Colonic mucosa (tissue), 4 donors: ENCODE measurements at regions of chr5 and their contacts with region 1.

Region 1: GRCh38 chr5:57082441-57083067 is 91.3 kb upstream of the GPBP1 start:
- DNase-seq: no peak
- H3K4me3 ChIP-seq: no peak overlapping the region
- H3K27ac ChIP-seq: no peak overlapping the region
- H3K4me1 ChIP-seq: no peaks in the 10 kb centered on the region
- H3K27me3 ChIP-seq: no peaks in the 10 kb centered on the region
- CTCF ChIP-seq: peak; percentile 52

Region 2: DNA sequence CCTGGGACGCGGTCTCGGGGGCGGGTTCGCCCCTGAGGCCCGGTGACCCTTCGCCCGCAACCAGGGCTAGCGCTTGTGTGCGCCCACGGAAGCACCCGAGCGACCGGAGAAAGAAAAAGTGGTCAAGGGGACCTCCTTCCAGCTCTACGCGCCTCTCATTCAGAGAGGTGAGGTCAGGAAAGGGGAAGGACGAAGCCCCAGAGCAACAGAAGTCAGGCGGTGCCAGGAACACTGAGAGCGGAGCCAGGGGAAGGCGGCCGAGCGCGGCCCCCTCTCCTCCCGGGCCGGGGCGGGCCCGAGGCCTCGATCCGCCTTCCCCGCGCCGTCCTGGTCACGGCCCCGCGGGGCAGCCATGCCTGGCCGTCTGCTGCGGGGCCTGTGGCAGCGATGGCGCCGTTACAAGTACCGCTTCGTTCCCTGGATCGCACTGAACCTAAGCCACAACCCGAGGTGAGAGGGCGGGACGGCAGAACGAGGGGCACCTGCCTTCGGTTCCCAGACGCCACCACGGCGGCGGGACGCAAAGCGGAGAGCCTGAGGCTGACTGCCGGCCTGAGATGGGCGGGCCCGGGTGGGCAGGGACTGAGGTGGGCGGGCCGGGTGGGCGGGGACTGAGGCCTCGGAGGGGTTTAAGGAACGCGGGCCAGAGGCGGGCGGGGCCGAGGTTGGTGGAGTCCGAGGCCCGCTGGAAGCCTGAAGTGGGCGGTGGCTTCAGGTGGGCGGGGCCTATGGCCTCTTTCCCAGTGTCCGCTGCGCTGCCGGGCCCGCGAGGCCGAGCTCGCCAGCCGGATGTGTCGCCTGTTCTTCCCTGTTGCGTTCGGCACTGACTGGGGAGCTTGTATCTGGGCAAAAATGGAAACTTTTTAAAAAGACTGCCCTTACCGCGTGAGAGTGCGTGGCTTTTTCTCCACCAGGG is 173.0 kb before region 1 on chr5 and contains the start of gene SETD9:
- intact Hi-C with region 1: loop called (anchors 5 kb)
- DNase-seq: peak; percentile 99
- H3K4me3 ChIP-seq: peak within 1 kb of the TSS; percentile 51
- H3K27ac ChIP-seq: peak within 1 kb of the TSS; percentile 97
- H3K4me1 ChIP-seq: no peaks in the 10 kb centered on the region
- H3K27me3 ChIP-seq: no peaks in the 10 kb centered on the region
- CTCF ChIP-seq: no peak
- total RNA-seq, gene SETD9: 7.6 to 18.5 TPM

Region 3: DNA sequence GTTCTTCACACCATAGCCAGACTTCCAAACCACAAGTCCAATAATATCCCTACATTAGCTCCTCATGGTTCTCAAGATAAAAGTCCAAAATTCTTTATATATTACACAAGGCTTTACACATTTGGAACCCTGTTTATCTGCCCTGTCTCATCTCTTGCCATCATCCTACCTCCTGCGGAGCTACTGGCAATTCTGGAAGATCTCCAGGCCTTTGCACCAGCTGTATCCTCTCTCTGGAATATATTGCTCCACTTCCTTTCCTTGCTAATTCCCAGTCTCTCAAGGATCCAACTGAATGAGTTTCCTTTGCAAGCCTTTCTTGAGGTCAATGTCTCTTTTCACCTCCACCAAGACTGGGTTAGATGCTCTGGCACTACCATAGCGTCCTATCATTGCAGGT is 89.3 kb before region 1 on chr5:
- intact Hi-C with region 1: loop called (anchors 10 kb)
- DNase-seq: no peak
- H3K4me3 ChIP-seq: no peak overlapping the region
- H3K27ac ChIP-seq: no peak overlapping the region
- H3K4me1 ChIP-seq: no peaks in the 10 kb centered on the region
- H3K27me3 ChIP-seq: no peaks in the 10 kb centered on the region
- CTCF ChIP-seq: no peak